Ascending aorta (tissue), 2 donors: ENCODE measurements at regions of chr16 and their contacts with region 1.

Region 1: DNA sequence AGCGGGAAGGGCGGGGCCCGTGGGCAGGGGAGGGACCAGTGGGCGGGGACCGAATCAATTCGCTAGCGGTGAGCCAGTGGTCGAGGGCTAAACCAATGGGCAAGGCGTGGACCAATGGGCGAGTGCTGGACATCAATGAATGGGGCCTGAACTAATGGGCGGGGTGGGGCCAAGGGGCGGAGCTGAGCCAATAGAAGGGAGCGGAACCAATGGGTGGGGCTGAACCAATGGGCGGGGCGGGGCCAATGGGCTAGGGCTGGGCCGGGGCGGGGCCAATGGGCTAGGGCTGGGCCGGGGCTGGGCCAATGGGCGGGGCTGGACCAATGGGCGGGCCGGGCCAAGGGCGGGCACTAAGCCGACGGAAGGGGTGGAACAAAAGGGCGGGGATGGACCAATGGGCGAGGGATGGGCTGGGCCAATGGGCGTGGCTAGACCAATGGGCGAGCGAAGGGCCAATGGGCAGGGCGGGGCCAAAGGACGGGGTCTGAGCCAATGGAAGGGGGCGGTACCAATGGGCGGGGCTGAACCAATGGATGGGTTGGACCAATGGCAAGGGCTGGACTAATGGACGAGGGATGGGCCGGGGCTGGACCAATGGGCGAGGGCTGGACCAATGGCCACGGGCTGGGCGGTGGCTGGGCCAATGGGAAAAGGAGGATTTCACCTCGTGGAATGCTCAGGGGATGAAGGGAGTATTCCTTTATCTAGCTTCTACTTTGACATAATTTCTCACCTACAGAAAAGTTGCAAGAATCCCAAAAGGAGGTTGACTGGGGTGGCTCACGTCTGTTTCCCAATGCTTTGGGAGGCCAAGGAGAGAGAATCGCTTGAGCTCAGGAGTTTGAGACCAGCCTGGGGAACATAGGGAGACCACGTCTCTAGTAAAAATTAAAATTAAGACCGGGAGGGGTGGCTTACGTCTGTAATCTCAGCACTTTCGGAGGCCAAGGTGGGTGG is 6.0 kb upstream of the FLYWCH1 start:
- DNase-seq: peak; percentile 99 to 100
- H3K4me3 ChIP-seq: peak overlapping the region; percentile 83 to 88
- H3K27ac ChIP-seq: peak overlapping the region; percentile 74 to 92
- H3K4me1 ChIP-seq: peaks cover 0 to 10% of the 10 kb centered on the region in 2 donors
- H3K27me3 ChIP-seq: no peaks in the 10 kb centered on the region
- CTCF ChIP-seq: no peak

Region 2: GRCh38 chr16:2752035-2752849 is 153.5 kb before region 1 on chr16 and contains the start of gene SRRM2:
- intact Hi-C with region 1: loop called (anchors 5 kb)
- DNase-seq: peak; percentile 67 to 97
- H3K4me3 ChIP-seq: peak within 1 kb of the TSS; percentile 86 to 96
- H3K27ac ChIP-seq: peak within 1 kb of the TSS; percentile 97 to 98
- H3K4me1 ChIP-seq: peaks cover 18 to 35% of the 10 kb centered on the region in 2 donors
- H3K27me3 ChIP-seq: no peaks in the 10 kb centered on the region
- CTCF ChIP-seq: no peak
- total RNA-seq, gene SRRM2: 359 TPM

Region 3: DNA sequence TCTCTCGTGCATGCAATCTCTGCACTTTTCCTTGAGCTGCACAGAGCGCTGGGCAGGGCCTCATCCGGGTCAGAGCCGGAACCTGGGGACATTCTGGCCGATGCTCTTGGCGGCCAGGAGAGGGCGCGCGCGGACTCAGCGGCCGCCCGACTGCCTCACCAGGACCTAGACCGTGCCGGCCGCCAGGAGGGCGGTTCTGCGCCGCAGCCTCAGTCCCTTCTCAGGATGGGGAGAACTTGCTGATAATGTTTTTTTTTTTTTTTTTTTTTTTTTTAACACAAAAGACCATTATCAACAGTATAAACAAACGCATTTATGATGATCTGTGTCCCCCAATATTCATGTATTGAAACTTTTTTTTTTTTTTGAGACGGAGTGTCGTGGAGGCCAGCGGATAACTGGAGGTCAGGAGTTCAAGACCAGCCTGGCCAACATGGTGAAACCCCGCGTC is 30.8 kb before region 1 on chr16:
- intact Hi-C with region 1: loop called (anchors 1 kb)
- DNase-seq: peak; percentile 30 to 87
- H3K4me3 ChIP-seq: no peak overlapping the region
- H3K27ac ChIP-seq: no peak overlapping the region
- H3K4me1 ChIP-seq: no peaks in the 10 kb centered on the region
- H3K27me3 ChIP-seq: no peaks in the 10 kb centered on the region
- CTCF ChIP-seq: peak; percentile 88 to 94 (median 94)

Region 4: GRCh38 chr16:2883027-2883851 is 22.5 kb before region 1 on chr16 and contains the start of gene FLYWCH2:
- intact Hi-C with region 1: loop called (anchors 1 kb)
- DNase-seq: peak; percentile 96 to 99
- H3K4me3 ChIP-seq: peak within 1 kb of the TSS; percentile 64 to 86
- H3K27ac ChIP-seq: peak within 1 kb of the TSS; percentile 91 to 94
- H3K4me1 ChIP-seq: peaks cover 0 to 5% of the 10 kb centered on the region in 2 donors
- H3K27me3 ChIP-seq: no peaks in the 10 kb centered on the region
- CTCF ChIP-seq: peak in 1 of 3 experiments; percentile 35
- total RNA-seq, gene FLYWCH2: 109 TPM

Region 5: GRCh38 chr16:2919511-2920255 is 14.0 kb after region 1 on chr16:
- intact Hi-C with region 1: loop called (anchors 1 kb)
- DNase-seq: peak in 1 of 2 donors; percentile 85
- H3K4me3 ChIP-seq: peak overlapping the region in 1 of 2 donors; percentile 1
- H3K27ac ChIP-seq: peak overlapping the region; percentile 81 to 84
- H3K4me1 ChIP-seq: peaks cover 3 to 9% of the 10 kb centered on the region in 2 donors
- H3K27me3 ChIP-seq: no peaks in the 10 kb centered on the region
- CTCF ChIP-seq: peak; percentile 86 to 95 (median 89)

Region 6: DNA sequence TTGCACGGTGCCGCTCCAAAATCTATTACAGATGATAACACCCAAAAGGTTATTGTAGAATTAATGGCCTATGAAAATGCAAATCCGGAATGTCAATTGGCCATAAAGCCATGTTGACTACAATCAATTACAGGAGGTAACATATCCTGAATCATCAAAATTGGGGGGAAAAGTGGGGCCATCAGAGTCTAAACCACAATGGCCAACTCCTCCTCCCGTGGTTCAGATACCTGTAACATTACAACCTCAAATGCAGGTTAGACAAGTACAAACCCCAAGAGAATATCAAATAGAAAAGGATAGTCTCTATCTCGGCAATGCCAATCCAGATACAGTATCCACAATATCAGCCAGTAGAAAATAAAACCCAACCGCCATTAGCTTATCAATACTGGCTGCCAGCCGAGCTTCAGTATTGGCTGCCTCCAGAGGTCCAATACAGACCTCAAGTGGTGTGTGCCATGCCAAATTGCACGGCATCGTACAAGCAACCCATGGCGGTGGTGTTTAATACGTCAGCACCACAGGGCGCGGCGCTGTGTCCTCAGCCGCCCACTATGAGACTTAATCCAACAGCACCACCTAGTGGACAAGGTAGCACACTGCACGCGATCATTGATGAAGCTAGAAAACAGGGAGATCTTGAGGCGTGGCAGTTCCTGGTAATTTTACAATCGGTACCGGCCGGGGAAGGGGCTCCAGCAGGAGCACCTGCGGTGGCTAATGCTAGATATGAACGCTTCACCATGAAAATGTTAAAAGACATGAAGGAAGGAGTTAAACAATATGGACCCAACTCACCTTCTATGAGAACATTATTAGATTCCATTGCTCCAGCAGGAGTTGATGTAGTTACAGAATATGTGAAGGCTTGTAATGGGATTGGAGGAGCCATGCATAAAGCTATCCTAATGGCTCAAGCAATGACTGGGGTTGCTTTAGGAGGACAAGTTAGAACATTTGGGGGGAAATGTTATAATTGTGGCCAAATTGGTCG is 21.2 kb after region 1 on chr16:
- intact Hi-C with region 1: loop called (anchors 2 kb)
- DNase-seq: peak; percentile 68 to 95
- H3K4me3 ChIP-seq: peak overlapping the region in 1 of 2 donors; percentile 45
- H3K27ac ChIP-seq: no peak overlapping the region
- H3K4me1 ChIP-seq: peaks cover 0 to 4% of the 10 kb centered on the region in 2 donors
- H3K27me3 ChIP-seq: no peaks in the 10 kb centered on the region
- CTCF ChIP-seq: peak; percentile 93 to 97 (median 94)

Region 7: DNA sequence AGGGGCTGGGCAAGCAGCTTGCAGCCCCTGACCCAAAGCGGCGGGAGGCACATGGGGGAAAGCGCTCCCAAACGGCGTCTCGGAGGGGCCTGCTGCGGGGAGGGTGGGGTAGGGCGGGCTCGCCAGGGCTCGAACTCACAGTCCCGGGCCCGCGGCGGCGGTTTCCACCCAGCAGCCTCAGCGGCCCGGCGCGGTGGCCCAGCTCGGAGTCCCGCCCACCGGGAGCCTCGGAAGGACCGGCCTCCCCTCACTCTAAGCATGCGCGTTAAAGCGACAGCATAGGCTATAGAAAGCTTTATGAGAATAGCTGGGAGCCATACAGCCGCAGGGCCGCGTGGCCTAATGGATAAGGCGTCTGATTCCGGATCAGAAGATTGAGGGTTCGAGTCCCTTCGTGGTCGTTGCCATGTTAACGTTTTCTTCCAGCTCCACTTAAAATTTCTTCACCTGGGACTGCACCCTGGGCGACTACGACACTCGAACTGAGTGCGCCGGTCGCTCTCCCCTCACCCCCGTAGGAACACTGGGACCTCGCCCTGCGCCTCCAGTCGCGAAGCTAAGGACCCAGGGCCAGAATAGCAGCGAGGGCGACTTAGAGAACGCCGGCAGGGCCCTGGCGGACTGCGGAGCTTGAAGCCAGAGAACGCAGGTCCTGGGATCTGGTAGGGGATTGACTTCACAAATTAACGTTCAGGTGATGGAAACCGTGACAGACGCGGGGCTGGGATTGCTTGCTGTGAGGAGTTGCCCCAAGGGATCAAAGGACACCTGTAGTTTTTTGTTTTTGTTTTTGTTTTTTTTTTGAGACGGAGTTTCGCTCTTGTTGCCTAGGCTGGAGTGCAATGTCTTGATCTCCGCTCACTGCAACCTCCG is 244.9 kb after region 1 on chr16:
- intact Hi-C with region 1: loop called (anchors 10 kb)
- DNase-seq: peak; percentile 89 to 98
- H3K4me3 ChIP-seq: peak overlapping the region; percentile 76
- H3K27ac ChIP-seq: peak overlapping the region; percentile 82 to 86
- H3K4me1 ChIP-seq: peaks cover 0 to 15% of the 10 kb centered on the region in 2 donors
- H3K27me3 ChIP-seq: no peaks in the 10 kb centered on the region
- CTCF ChIP-seq: no peak